K562 (cell line): ENCODE measurements at regions of chr10 and their contacts with region 1.

Region 1: DNA sequence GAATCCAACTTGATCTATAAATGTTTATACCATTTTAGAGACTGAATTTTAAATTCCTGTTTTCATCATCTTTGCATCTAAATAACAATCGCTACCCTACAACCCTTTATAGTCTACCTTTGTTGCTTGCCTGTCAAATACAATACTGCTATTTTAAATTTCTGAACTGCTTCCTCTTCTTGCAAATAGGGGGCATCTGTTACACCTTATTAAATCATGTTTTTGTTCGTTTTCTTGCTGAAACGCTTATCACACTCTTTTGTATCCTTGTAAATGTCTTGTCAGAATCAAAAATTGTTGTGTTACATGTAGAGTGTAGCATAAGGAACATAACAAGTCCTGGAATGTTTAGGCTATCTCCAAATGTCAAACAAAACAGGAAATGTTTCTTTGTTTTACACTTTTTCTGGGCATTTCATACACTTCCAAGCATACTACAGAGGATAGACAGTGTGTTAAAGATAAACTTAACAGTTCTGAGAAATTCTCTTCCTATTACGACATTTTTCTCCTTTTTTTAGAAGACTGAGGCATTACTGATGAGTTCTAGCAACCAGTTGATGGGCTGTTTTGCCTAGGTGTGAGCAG is 281.3 kb downstream of the GPR158 start:
- DNase-seq: peak in 2 of 4 experiments; percentile 12 to 14
- ATAC-seq: peak; percentile 72
- H3K4me3 ChIP-seq: no peak overlapping the region
- H3K27ac ChIP-seq: peak overlapping the region; percentile 38; the same call in 1 of the 3 replicates
- H3K4me1 ChIP-seq: no peaks in the 10 kb centered on the region
- H3K27me3 ChIP-seq: no peaks in the 10 kb centered on the region
- CTCF ChIP-seq: peak; percentile 8 to 47 (median 12); a peak in 2 of 6 replicates
- EP300 ChIP-seq: no peak
- POLR2A ChIP-seq: no peak
- RAD21 ChIP-seq: peak in 1 of 2 experiments; percentile 53; a peak in 2 of 4 replicates

Region 2: GRCh38 chr10:25382029-25382810 is 73.9 kb before region 1 on chr10:
- CTCF ChIA-PET with region 1: no interaction called
- POLR2A ChIA-PET with region 1: no interaction called
- in situ Hi-C with region 1: no loop called
- intact Hi-C with region 1: no loop called
- DNase-seq: no peak
- ATAC-seq: no peak
- H3K4me3 ChIP-seq: no peak overlapping the region
- H3K27ac ChIP-seq: no peak overlapping the region
- H3K4me1 ChIP-seq: no peaks in the 10 kb centered on the region
- H3K27me3 ChIP-seq: no peaks in the 10 kb centered on the region
- CTCF ChIP-seq: no peak
- EP300 ChIP-seq: no peak
- POLR2A ChIP-seq: no peak
- RAD21 ChIP-seq: no peak

Region 3: DNA sequence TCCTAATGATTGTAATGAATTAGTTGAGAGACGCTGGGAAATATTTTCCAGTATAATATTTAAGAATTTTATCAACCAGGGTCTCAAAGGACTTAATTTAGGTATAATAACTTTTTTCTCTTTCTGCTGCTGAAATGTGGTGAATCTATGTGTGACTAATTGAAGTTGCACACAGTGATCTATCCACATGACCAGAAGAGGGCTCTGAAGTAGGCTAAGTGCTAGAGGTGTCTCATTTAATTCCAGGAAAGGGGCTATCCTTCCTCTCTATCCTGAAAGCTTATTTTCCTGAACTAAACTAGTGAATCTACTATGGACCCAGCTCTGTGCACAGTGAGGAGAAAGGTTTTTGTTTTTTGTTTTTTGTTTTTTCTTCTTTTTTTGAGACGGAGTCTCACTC is 183.6 kb after region 1 on chr10:
- CTCF ChIA-PET with region 1: no interaction called
- POLR2A ChIA-PET with region 1: no interaction called
- in situ Hi-C with region 1: no loop called
- intact Hi-C with region 1: loop called (anchors 5 kb)
- DNase-seq: peak in 2 of 4 experiments; percentile 19 to 21
- ATAC-seq: peak; percentile 86
- H3K4me3 ChIP-seq: no peak overlapping the region
- H3K27ac ChIP-seq: no peak overlapping the region
- H3K4me1 ChIP-seq: no peaks in the 10 kb centered on the region
- H3K27me3 ChIP-seq: no peaks in the 10 kb centered on the region
- CTCF ChIP-seq: peak in 2 of 3 experiments; percentile 11 to 38; a peak in 3 of 6 replicates
- EP300 ChIP-seq: no peak
- POLR2A ChIP-seq: no peak
- RAD21 ChIP-seq: peak; percentile 25 to 44; a peak in 2 of 4 replicates